ENCODE measurements at regions of chr12 and their contacts with region 1.

Region 1: GRCh38 chr12:100827901-100828520 is 33.4 kb downstream of the ANO4 start:
- ATAC-seq: peak in 4 of 8 experiments; percentile 54 to 76 (median 62)
- H3K4me3 ChIP-seq: no peak overlapping the region
- H3K27ac ChIP-seq: no peak overlapping the region
- H3K4me1 ChIP-seq: no peaks in the 10 kb centered on the region

Region 2: GRCh38 chr12:100624571-100624970 is 203.4 kb before region 1 on chr12:
- in situ Hi-C with region 1: no loop called
- ATAC-seq: no peak
- H3K4me3 ChIP-seq: no peak overlapping the region
- H3K27ac ChIP-seq: no peak overlapping the region
- H3K4me1 ChIP-seq: no peaks in the 10 kb centered on the region

Region 3: GRCh38 chr12:101076921-101077320 is 248.9 kb after region 1 on chr12:
- in situ Hi-C with region 1: no loop called
- ATAC-seq: peak in 6 of 8 experiments; percentile 14 to 69 (median 54)
- H3K4me3 ChIP-seq: no peak overlapping the region
- H3K27ac ChIP-seq: no peak overlapping the region
- H3K4me1 ChIP-seq: peaks cover 0 to 7% of the 10 kb centered on the region in 2 donors

Region 4: DNA sequence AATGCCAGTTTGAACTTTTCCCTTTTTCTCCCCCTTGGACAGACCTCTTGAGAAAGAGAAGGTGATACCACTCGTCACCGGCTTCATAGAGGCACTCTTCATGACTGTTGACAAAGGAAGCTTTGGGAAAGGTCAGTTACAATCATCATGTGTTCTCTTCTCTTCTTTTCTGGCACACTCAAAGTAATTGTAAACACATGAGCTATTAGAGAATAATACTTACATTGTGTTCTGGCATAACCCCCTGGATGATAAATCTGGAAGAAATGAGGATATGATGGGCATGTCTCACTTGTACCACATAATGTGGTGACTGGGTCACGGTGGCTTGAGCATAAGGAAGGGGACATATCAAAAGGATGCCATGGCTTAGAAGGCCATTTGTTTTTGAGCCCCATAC is 471.9 kb after region 1 on chr12:
- in situ Hi-C with region 1: loop called in 1 of 9 experiments (anchors 25 kb)
- ATAC-seq: no peak
- H3K4me3 ChIP-seq: no peak overlapping the region
- H3K27ac ChIP-seq: no peak overlapping the region
- H3K4me1 ChIP-seq: no peaks in the 10 kb centered on the region